ENCODE measurements at regions of chr11 and their contacts with region 1.

Region 1: GRCh38 chr11:121446752-121447156 is 5.4 kb upstream of the SORL1 start:
- DNase-seq: no peak
- ATAC-seq: peak; percentile 42
- H3K4me3 ChIP-seq: no peak overlapping the region
- H3K27ac ChIP-seq: peak overlapping the region; percentile 76
- H3K4me1 ChIP-seq: peaks cover 59% of the 10 kb centered on the region
- H3K27me3 ChIP-seq: no peaks in the 10 kb centered on the region
- CTCF ChIP-seq: peak in 2 of 3 experiments; percentile 19 to 37; a peak in 4 of 6 replicates
- EP300 ChIP-seq: no peak
- POLR2A ChIP-seq: no peak
- RAD21 ChIP-seq: peak; percentile 48

Region 2: GRCh38 chr11:121274332-121274991 is 172.3 kb before region 1 on chr11:
- CTCF ChIA-PET with region 1: no interaction called
- POLR2A ChIA-PET with region 1: no interaction called
- RAD21 ChIA-PET with region 1: no interaction called
- SMC1A ChIA-PET with region 1: no interaction called
- in situ Hi-C with region 1: no loop called
- intact Hi-C with region 1: no loop called
- DNase-seq: no peak
- ATAC-seq: no peak
- H3K4me3 ChIP-seq: no peak overlapping the region
- H3K27ac ChIP-seq: no peak overlapping the region
- H3K4me1 ChIP-seq: no peaks in the 10 kb centered on the region; the same call in 1 of the 2 replicates
- H3K27me3 ChIP-seq: peaks cover 0 to 2% of the 10 kb centered on the region in 2 experiments; a peak in 1 of 4 replicates
- CTCF ChIP-seq: no peak
- EP300 ChIP-seq: no peak
- POLR2A ChIP-seq: no peak
- RAD21 ChIP-seq: no peak

Region 3: DNA sequence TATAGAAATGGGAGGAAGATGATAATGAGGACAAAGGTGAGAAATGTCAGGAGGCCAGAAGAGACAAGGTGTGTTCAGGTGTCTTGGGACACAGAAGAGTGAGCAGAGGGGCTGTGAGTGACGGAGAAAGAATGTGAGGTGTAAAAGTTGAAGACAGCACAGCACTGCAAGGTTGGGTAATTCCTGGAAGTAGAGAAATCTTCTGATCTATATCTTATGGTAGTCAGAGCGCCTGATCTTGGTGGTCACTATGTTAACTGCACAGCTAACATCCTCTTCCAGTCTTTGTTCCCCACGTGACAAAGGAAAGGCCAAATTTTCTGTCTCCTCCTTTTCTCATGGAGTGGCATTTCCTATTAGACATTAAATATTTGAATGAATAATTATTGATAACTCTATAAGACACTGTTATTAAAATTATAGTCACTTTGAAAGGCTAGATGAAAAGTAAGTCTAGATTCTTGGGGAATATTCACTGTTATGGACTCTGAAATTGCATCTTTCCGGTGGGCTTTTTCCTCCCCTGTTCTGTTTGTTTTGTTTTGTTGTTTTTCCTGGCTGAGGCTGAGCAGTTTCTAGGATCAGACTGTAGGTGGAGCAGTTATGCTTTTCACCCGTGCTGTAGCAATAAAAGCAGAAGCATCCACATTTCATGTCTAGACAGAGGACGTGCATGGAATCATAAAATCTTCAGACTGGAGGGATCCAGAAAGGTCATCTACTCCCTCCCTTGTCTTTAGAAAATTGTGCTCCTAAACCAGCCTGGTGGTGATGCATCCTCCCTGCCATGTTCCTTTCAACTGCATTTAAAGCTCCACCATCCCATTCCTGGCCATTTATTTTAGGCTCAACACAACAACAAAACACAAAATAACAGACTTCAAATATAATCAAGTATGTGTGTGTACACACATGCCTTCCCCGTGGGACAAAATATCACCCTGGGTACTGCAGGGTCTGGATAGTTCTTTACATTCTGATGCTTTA is 127.6 kb before region 1 on chr11:
- CTCF ChIA-PET with region 1: interaction called, 12 read pairs
- POLR2A ChIA-PET with region 1: interaction called, 3 read pairs
- RAD21 ChIA-PET with region 1: interaction called, 6 read pairs
- SMC1A ChIA-PET with region 1: interaction called, 7 read pairs
- in situ Hi-C with region 1: no loop called
- intact Hi-C with region 1: no loop called
- DNase-seq: no peak
- ATAC-seq: peak; percentile 84
- H3K4me3 ChIP-seq: no peak overlapping the region
- H3K27ac ChIP-seq: no peak overlapping the region
- H3K4me1 ChIP-seq: peaks cover 4% of the 10 kb centered on the region; the same call in 1 of the 2 replicates
- H3K27me3 ChIP-seq: no peaks in the 10 kb centered on the region
- CTCF ChIP-seq: peak; percentile 75 to 88 (median 86)
- EP300 ChIP-seq: no peak
- POLR2A ChIP-seq: no peak
- RAD21 ChIP-seq: peak; percentile 93

Region 4: GRCh38 chr11:121417055-121417551 is 29.7 kb before region 1 on chr11:
- CTCF ChIA-PET with region 1: interaction called, 6 read pairs
- POLR2A ChIA-PET with region 1: interaction called, 5 read pairs
- RAD21 ChIA-PET with region 1: interaction called, 11 read pairs
- SMC1A ChIA-PET with region 1: interaction called, 34 read pairs
- in situ Hi-C with region 1: no loop called
- intact Hi-C with region 1: loop called (anchors 5 kb)
- DNase-seq: peak; percentile 92
- ATAC-seq: peak; percentile 87
- H3K4me3 ChIP-seq: no peak overlapping the region
- H3K27ac ChIP-seq: peak overlapping the region; percentile 9; the same call in 1 of the 2 replicates
- H3K4me1 ChIP-seq: peaks cover 45% of the 10 kb centered on the region
- H3K27me3 ChIP-seq: no peaks in the 10 kb centered on the region
- CTCF ChIP-seq: no peak
- EP300 ChIP-seq: peak; percentile 26 to 71; a peak in 2 of 4 replicates
- POLR2A ChIP-seq: no peak
- RAD21 ChIP-seq: no peak

Region 5: GRCh38 chr11:121426476-121427399 is 20.0 kb before region 1 on chr11:
- CTCF ChIA-PET with region 1: interaction called, 10 read pairs
- POLR2A ChIA-PET with region 1: interaction called, 24 read pairs
- RAD21 ChIA-PET with region 1: interaction called, 50 read pairs
- SMC1A ChIA-PET with region 1: interaction called, 241 read pairs
- in situ Hi-C with region 1: no loop called
- intact Hi-C with region 1: loop called (anchors 1 kb)
- DNase-seq: no peak
- ATAC-seq: peak; percentile 57
- H3K4me3 ChIP-seq: peak overlapping the region; percentile 39; the same call in 1 of the 2 replicates
- H3K27ac ChIP-seq: no peak overlapping the region
- H3K4me1 ChIP-seq: peaks cover 46% of the 10 kb centered on the region
- H3K27me3 ChIP-seq: no peaks in the 10 kb centered on the region
- CTCF ChIP-seq: peak in 2 of 3 experiments; percentile 14 to 21; a peak in 1 of 6 replicates
- EP300 ChIP-seq: no peak
- POLR2A ChIP-seq: no peak
- RAD21 ChIP-seq: no peak

Region 6: DNA sequence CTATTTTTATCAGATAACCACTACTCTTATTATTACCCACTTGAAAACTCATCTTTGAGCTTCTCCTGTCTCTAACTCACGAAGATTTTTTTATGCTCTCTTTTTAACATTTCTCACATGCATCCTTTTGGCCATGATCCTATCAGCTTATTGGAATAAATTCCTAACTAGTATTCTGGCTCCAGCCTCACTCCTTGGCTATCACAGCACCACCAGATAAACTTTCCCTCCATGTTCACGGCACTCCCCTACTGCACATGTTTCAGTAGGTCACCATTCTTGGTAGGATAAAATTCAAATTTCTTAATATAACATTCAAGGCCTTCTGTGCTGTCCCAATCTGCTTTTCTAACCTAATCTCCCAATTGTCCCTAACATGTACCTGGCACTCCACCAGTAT is 1022.2 kb after region 1 on chr11:
- CTCF ChIA-PET with region 1: no interaction called
- POLR2A ChIA-PET with region 1: no interaction called
- RAD21 ChIA-PET with region 1: no interaction called
- SMC1A ChIA-PET with region 1: no interaction called
- in situ Hi-C with region 1: no loop called
- intact Hi-C with region 1: no loop called
- DNase-seq: no peak
- ATAC-seq: no peak
- H3K4me3 ChIP-seq: no peak overlapping the region
- H3K27ac ChIP-seq: no peak overlapping the region
- H3K4me1 ChIP-seq: no peaks in the 10 kb centered on the region
- H3K27me3 ChIP-seq: no peaks in the 10 kb centered on the region
- CTCF ChIP-seq: no peak
- EP300 ChIP-seq: no peak
- POLR2A ChIP-seq: no peak
- RAD21 ChIP-seq: no peak

Measured in GM12878 (cell line).